ENCODE measurements at regions of chr12 and their contacts with region 1.

Region 1: DNA sequence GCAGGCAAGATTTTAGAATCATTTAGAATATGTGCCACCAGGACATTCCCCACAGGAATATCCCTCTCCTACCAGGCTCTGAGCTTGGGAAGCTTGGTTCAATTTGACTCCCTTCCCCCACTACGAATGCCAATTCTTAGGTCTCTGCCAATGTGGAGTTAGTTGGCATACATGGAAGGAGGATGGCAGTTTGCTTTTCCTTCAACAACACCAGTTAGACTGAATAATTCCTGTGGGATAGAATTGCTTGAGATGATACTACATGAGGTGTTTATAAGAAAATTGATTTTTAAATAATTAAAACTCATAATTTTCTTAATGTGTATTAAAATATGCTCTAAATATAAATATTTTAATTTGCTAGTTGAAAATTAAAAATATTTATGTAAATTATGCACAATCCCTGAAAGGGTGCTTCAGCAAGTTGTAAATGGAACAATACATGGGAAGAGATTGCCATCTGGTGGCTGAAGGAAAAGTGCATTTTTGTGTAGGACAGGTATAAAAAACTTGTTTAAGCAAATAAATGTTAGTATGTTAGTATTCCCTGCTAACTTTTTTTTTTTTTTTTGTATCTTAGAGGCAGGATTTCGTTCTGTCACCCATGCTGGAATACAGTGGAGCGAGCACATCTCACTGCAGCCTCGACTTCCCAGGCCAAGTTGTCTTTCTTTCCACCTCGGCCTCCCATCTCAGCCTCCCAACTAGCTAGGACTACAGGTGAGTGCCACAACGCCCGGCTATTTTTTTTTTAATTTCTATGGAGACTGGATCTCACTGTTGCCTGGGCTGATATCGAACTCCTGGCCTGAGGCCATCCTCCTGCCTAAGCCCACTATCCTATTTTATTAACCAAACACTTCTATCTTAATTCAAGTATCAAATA is 25.8 kb upstream of the STRAP start:
- DNase-seq: peak in 1 of 3 donors; percentile 59
- ATAC-seq: peak; percentile 73 to 86 (median 81)
- H3K4me3 ChIP-seq: no peak overlapping the region
- H3K27ac ChIP-seq: no peak overlapping the region
- H3K4me1 ChIP-seq: peaks cover 0 to 6% (median under 1%) of the 10 kb centered on the region in 4 donors
- H3K27me3 ChIP-seq: no peaks in the 10 kb centered on the region
- CTCF ChIP-seq: peak; percentile 78 to 91 (median 80)
- POLR2A ChIP-seq: no peak

Region 2: DNA sequence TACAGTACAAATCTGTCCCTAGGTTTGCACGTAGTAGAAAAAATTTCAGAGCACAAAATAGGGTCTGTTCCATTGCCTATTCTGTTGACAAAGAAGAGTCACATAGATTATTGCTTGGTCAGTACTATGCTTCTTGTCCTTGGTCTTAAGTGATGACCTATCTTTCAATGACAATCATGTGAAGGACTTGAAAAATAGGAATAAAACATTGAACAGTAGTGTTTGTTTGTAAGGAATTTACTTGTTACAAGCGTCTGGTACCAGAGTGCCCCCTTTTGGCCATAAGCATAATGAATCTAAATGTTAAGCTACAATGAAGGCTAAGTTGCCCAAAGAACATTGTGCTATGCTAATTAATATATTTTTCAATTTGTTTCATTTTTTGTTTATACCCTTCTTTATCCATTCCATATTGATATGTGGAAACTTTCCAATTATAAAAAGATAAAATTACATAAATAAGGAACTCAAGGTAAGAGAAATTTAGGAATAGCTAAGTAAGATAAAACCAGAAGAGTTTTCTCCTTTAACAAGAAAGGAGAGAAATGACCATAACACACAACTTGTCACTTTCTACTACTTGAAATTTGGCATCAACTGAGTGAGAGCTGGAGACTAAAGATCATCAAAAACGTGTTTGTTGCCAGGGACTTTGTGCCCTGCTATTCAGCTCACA is 271.8 kb before region 1 on chr12:
- intact Hi-C with region 1: loop called in 1 of 2 experiments (anchors 5 kb)
- DNase-seq: no peak
- ATAC-seq: peak; percentile 62 to 72 (median 63)
- H3K4me3 ChIP-seq: no peak overlapping the region
- H3K27ac ChIP-seq: no peak overlapping the region
- H3K4me1 ChIP-seq: no peaks in the 10 kb centered on the region
- H3K27me3 ChIP-seq: no peaks in the 10 kb centered on the region
- CTCF ChIP-seq: peak; percentile 55 to 70 (median 62)
- POLR2A ChIP-seq: no peak

Region 3: DNA sequence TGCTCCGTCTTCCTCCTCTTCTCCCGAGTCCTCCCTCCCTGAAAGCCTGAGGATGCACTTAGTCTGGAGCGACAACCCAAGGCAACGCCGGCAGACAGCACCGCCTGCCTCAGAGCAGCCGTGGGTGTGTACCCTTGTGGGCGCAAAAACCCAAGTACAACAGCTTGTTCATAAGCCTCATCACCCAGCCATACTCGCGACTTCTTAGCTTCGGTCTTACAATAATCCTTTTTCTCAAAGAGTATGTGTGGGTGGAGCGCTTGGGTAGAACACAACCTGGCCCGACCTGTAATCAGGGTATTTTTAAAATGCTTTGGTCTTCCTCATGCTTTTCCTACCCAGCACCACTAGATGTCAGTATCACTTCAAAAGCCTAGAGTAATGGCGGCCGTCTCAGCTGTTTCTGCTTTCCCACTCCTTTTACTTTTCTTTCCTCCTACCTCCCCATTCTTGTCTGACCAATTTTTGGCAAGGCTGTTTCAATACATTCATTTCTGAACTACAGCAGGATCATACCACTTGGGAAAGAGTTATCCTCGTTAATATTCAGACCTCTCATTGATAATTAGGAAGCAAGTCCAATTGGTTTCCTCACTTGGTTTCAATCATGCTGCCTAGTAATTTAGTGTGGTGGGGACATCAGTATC is 266.0 kb before region 1 on chr12:
- intact Hi-C with region 1: loop called (anchors 5 to 10 kb)
- DNase-seq: peak in 2 of 3 donors; percentile 33 to 53
- ATAC-seq: peak; percentile 98 to 99 (median 98)
- H3K4me3 ChIP-seq: peak overlapping the region in 1 of 3 donors; percentile 29
- H3K27ac ChIP-seq: no peak overlapping the region
- H3K4me1 ChIP-seq: peaks cover 0 to 4% (median 0%) of the 10 kb centered on the region in 4 donors
- H3K27me3 ChIP-seq: no peaks in the 10 kb centered on the region
- CTCF ChIP-seq: peak; percentile 86 to 95 (median 90)
- POLR2A ChIP-seq: no peak